ENCODE measurements at regions of chr9 and their contacts with region 1.

Region 1: GRCh38 chr9:76516350-76516749 is 57.4 kb downstream of the GCNT1 start:
- H3K4me3 Mint-ChIP-seq: no peak overlapping the region
- H3K27ac Mint-ChIP-seq: no peak overlapping the region
- H3K4me1 Mint-ChIP-seq: peaks cover 16% of the 10 kb centered on the region
- H3K27me3 Mint-ChIP-seq: no peaks in the 10 kb centered on the region

Region 2: GRCh38 chr9:76458903-76459690 is 57.3 kb before region 1 on chr9 and contains the start of gene GCNT1:
- intact Hi-C with region 1: loop called (anchors 10 kb)
- H3K4me3 Mint-ChIP-seq: peak within 1 kb of the TSS; percentile 98
- H3K27ac Mint-ChIP-seq: peak within 1 kb of the TSS; percentile 96
- H3K4me1 Mint-ChIP-seq: peaks cover 31% of the 10 kb centered on the region
- H3K27me3 Mint-ChIP-seq: no peaks in the 10 kb centered on the region

Region 3: DNA sequence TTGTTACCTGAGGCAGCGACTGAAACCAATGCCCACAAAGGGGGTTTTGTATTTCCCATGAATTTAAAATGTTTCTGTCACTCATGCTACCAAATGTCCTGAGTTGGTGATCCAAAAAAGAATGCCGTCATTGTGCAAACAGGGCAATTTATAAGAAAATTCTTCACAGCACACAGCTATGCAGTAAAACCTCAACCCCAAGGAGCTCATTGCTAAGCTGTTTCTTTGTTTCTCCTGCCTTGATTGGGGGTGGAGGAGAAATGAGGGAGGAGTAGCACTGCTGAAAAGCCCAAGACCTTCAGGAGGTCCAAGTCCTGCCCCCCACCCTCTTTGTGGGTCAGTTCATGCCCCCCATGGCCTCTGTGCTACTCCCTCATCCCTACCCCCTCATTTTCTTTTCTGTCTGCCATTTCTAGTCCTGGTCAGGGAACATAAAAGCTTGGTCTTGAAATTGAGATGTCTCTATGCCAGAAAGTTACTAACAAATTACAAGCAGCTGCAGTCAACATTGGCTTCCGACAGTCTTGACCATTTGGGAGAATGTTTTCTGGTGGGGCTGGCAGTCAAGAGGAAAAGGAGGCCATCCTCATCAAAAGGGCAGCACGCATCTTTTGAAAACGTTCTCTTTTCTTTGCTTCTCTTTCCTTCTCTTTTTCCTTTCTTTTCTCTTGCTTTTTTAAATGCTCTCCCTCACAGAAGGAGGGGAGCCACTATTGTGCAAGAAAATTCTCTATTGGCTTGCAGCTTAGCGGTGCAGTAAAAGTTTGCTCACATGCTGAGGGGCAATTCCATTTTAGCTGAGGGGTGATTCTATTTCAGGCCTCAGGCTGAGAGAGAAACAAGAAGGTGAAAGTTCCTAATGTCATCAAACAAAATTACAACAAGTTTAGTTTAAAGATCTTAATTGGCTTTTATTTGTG is 76.0 kb after region 1 on chr9:
- intact Hi-C with region 1: no loop called
- H3K4me3 Mint-ChIP-seq: peak overlapping the region; percentile 36
- H3K27ac Mint-ChIP-seq: peak overlapping the region; percentile 67
- H3K4me1 Mint-ChIP-seq: peaks cover 54% of the 10 kb centered on the region
- H3K27me3 Mint-ChIP-seq: no peaks in the 10 kb centered on the region

Region 4: GRCh38 chr9:76605321-76605900 is 89.1 kb after region 1 on chr9:
- intact Hi-C with region 1: no loop called
- H3K4me3 Mint-ChIP-seq: no peak overlapping the region
- H3K27ac Mint-ChIP-seq: no peak overlapping the region
- H3K4me1 Mint-ChIP-seq: peaks cover 43% of the 10 kb centered on the region
- H3K27me3 Mint-ChIP-seq: no peaks in the 10 kb centered on the region